Activated CD4-positive, alpha-beta memory T cell treated with anti-CD3 and anti-CD28 coated beads for 36 hours (primary cell): ENCODE measurements at regions of chr12 and their contacts with region 1.

Region 1: GRCh38 chr12:27179400-27180214 is 64.5 kb upstream of the STK38L start:
- DNase-seq: peak; percentile 47
- H3K4me3 Mint-ChIP-seq: peak overlapping the region; percentile 40
- H3K27ac Mint-ChIP-seq: peak overlapping the region; percentile 71
- H3K4me1 Mint-ChIP-seq: peaks cover 42% of the 10 kb centered on the region
- H3K27me3 Mint-ChIP-seq: no peaks in the 10 kb centered on the region

Region 2: GRCh38 chr12:27220057-27220987 is 40.7 kb after region 1 on chr12:
- CTCF ChIA-PET with region 1: no interaction called
- POLR2A ChIA-PET with region 1: interaction called, 3 read pairs
- intact Hi-C with region 1: loop called (anchors 1 kb)
- DNase-seq: peak; percentile 55
- H3K4me3 Mint-ChIP-seq: no peak overlapping the region
- H3K27ac Mint-ChIP-seq: peak overlapping the region; percentile 62
- H3K4me1 Mint-ChIP-seq: peaks cover 23% of the 10 kb centered on the region
- H3K27me3 Mint-ChIP-seq: peaks cover 2% of the 10 kb centered on the region

Region 3: DNA sequence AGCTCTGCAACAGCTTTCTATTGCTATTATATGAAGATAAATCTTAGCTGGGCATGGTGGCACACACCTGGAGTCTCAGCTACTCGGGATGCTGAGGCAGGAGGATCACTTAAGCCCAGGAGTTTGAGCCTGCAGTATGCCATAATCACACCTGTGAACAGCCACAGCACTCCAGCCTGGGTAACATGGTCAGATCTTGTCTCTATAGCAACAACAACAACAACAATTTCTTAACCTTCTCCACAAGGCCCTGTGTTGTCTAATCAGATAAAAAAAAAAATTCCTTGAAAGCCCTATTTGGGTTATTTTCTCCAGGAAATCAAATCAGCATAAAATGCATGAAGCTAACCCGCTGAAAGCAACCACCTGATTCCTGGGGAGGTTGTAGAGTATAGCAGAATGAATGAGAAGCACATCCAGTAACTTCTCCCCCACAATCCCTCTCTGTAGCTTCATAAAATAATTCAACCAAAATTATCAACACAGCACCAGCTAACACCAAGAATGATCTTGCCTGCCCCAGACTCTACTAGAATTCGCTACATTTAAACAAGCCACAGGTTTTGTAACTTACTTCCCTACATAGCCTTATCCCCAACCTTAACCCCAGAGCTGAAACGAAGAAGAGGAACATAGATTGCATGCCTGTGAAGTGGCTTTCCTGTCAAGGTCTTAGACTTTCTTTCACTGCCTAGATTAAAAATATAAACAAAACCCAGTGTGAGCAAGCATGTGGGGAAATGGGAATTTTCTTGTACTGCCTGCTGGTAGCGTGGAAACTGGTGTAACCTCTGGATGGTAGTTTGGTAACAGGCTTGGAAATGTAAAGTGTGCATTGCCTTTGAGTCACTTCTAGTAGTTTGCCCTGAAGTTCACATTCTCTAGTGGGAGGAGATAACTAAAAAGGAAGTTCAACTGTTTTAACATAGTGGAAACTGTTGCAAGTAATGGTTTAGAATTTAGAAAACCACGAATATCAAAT is 58.5 kb after region 1 on chr12:
- CTCF ChIA-PET with region 1: interaction called, 4 read pairs
- POLR2A ChIA-PET with region 1: interaction called, 10 read pairs
- intact Hi-C with region 1: loop called (anchors 1 kb)
- DNase-seq: no peak
- H3K4me3 Mint-ChIP-seq: no peak overlapping the region
- H3K27ac Mint-ChIP-seq: peak overlapping the region; percentile 67
- H3K4me1 Mint-ChIP-seq: peaks cover 25% of the 10 kb centered on the region
- H3K27me3 Mint-ChIP-seq: peaks cover 1% of the 10 kb centered on the region

Region 4: GRCh38 chr12:27243804-27244683 is 64.4 kb after region 1 on chr12 and contains the start of gene STK38L:
- CTCF ChIA-PET with region 1: interaction called, 5 read pairs
- POLR2A ChIA-PET with region 1: interaction called, 10 read pairs
- intact Hi-C with region 1: loop called (anchors 1 kb)
- DNase-seq: peak; percentile 98
- H3K4me3 Mint-ChIP-seq: peak within 1 kb of the TSS; percentile 100
- H3K27ac Mint-ChIP-seq: peak within 1 kb of the TSS; percentile 91
- H3K4me1 Mint-ChIP-seq: peaks cover 45% of the 10 kb centered on the region
- H3K27me3 Mint-ChIP-seq: no peaks in the 10 kb centered on the region
- total RNA-seq, gene STK38L: 25.1 to 25.2 TPM

Region 5: DNA sequence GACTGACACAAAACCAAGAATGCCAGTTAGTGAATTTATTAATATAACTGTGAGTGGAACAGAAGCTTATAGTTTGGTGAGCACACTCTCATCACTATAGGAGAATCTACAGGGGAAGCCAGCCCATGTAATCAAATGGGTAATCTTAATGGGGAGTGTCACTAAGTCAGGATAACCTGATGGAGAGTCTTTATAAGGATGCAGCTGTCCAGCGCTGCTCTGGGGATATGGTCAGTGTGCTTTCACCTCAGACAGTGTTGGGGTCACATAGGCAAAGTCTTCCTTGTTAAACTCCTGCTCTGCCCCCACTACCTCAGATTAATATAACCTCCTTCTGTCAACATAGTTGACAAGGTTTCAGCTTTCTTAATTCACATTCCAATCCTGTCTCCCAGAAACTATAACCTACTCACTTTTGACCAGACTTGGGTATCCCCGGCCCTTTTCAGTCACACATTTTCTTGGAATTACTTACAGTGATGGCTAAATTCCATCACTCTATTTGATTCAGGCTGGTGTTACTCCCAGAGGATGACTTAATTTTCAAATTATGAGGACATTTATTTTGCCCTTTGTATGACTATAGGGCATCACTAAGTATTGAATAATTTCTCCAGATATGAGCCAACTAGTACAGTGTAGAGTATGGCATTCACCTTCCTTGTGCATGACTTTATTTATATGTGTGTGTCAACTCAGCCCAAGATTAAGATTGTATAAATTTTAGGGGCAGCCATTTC is 77.7 kb after region 1 on chr12:
- CTCF ChIA-PET with region 1: no interaction called
- POLR2A ChIA-PET with region 1: no interaction called
- intact Hi-C with region 1: no loop called
- DNase-seq: no peak
- H3K4me3 Mint-ChIP-seq: no peak overlapping the region
- H3K27ac Mint-ChIP-seq: no peak overlapping the region
- H3K4me1 Mint-ChIP-seq: peaks cover 33% of the 10 kb centered on the region
- H3K27me3 Mint-ChIP-seq: no peaks in the 10 kb centered on the region